A673 (cell line): ENCODE measurements at regions of chr14 and their contacts with region 1.

Region 1: GRCh38 chr14:32993862-32994261 is 55.2 kb downstream of the NPAS3 start:
- DNase-seq: peak; percentile 55
- H3K4me3 ChIP-seq: no peak overlapping the region
- H3K27ac ChIP-seq: peak overlapping the region; percentile 28
- H3K4me1 ChIP-seq: peaks cover 37% of the 10 kb centered on the region
- H3K27me3 ChIP-seq: no peaks in the 10 kb centered on the region
- CTCF ChIP-seq: no peak

Region 2: GRCh38 chr14:33030386-33030785 is 36.5 kb after region 1 on chr14:
- CTCF ChIA-PET with region 1: no interaction called
- POLR2A ChIA-PET with region 1: no interaction called
- intact Hi-C with region 1: loop called (anchors 1 kb)
- DNase-seq: no peak
- H3K4me3 ChIP-seq: no peak overlapping the region
- H3K27ac ChIP-seq: no peak overlapping the region
- H3K4me1 ChIP-seq: peaks cover 13% of the 10 kb centered on the region
- H3K27me3 ChIP-seq: no peaks in the 10 kb centered on the region
- CTCF ChIP-seq: no peak